ENCODE measurements at regions of chr2 and their contacts with region 1.

Region 1: GRCh38 chr2:168455648-168456520 is at the start of gene CERS6:
- DNase-seq: peak; percentile 97
- H3K4me3 ChIP-seq: peak within 1 kb of the TSS; percentile 92 to 94
- H3K27ac ChIP-seq: peak within 1 kb of the TSS; percentile 89
- H3K4me1 ChIP-seq: no peaks in the 10 kb centered on the region
- H3K27me3 ChIP-seq: no peaks in the 10 kb centered on the region
- CTCF ChIP-seq: peak in 1 of 4 experiments; percentile 31
- POLR2A ChIP-seq: peak; percentile 93
- total RNA-seq, gene CERS6: 30.1 to 67.8 TPM

Region 2: DNA sequence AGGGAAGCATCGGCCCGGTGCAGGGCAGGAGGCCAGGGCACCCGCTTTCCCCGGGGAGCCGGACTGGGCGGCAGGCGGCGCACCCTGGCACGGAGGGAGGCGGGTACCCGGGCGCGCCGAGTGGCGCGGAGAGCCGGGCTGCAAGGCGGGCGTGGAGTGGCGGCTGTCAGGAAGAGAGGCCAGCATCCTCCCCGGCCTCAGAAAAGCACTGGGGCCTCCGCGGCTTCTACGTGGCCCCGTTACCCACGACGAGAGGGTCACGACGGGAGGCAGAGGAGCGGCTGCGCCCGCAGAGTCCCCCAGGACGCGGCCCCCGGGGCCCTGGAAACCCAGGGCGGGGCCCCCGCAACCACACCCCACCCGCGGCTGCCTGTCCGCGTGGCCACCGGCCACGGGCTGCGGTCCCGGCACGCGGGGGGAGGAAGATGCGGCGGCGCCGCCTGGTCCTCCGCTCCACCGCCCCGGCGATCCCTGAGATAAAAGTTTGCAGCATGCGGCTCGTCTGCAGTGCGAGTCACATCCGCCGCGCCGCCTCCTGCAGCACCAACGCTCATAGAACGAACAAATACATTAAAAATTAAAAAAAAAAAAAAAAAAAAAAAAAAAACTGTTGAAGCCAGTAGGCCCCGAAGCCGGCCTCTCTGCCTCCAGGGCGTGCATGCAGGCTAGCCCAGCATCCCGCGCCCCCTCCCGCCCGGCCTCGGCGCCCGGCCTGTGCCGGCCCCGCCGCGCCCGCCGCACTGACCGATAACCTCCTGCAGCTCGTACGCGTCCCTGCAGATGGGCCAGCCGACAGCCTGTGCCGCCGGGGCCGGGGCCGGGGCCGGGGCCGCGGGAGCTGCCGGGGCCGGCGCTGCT is 209.2 kb before region 1 on chr2:
- intact Hi-C with region 1: loop called (anchors 10 kb)
- DNase-seq: peak; percentile 74
- H3K4me3 ChIP-seq: peak overlapping the region; percentile 79 to 80
- H3K27ac ChIP-seq: peak overlapping the region; percentile 88 to 89
- H3K4me1 ChIP-seq: no peaks in the 10 kb centered on the region
- H3K27me3 ChIP-seq: no peaks in the 10 kb centered on the region
- CTCF ChIP-seq: peak; percentile 20 to 45 (median 36)
- POLR2A ChIP-seq: no peak

Region 3: DNA sequence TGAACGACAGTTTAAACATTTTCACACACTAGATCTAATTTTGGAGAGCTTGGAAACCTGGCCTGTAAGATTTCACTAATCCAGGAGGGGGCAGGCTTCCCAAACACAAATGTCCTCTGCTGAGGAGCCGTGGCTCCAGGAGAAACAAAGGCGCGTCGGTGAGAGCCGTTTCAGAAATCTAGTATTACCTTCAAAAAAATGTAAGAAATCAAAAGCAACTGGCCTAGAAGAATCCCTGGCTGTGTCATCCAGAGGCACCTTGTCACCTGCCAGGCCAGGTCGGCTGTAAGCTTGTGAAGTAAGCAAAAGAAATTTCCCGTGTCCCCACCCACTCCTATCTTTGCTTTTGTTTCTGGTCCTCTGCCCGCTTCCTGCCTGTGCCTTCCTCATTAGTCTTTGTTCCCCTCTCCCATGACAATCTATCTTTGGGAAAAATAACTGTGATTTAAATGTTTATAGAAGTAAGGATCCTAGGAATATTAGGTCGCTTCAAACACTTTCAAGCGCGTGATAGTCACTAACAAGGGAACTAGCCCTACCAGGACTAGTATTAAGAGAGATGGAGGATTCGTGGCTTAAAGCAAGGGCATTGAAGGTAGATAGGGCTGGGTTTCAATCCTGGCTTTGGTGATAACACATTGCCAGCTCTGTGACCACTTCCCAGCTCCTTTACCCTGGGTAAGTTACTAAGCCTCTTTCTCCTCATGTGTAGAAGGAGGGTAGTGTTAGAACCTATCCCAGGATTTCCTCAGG is 109.0 kb before region 1 on chr2:
- intact Hi-C with region 1: loop called (anchors 5 kb)
- DNase-seq: peak; percentile 68
- H3K4me3 ChIP-seq: peak overlapping the region; percentile 26 to 38
- H3K27ac ChIP-seq: peak overlapping the region; percentile 26 to 46
- H3K4me1 ChIP-seq: no peaks in the 10 kb centered on the region
- H3K27me3 ChIP-seq: no peaks in the 10 kb centered on the region
- CTCF ChIP-seq: peak; percentile 52 to 89 (median 87)
- POLR2A ChIP-seq: no peak

Region 4: GRCh38 chr2:168635065-168635577 is 179.2 kb after region 1 on chr2:
- intact Hi-C with region 1: loop called (anchors 5 kb)
- DNase-seq: no peak
- H3K4me3 ChIP-seq: no peak overlapping the region
- H3K27ac ChIP-seq: peak overlapping the region in 1 of 2 donors; percentile 30
- H3K4me1 ChIP-seq: no peaks in the 10 kb centered on the region
- H3K27me3 ChIP-seq: no peaks in the 10 kb centered on the region
- CTCF ChIP-seq: no peak
- POLR2A ChIP-seq: no peak

Region 5: DNA sequence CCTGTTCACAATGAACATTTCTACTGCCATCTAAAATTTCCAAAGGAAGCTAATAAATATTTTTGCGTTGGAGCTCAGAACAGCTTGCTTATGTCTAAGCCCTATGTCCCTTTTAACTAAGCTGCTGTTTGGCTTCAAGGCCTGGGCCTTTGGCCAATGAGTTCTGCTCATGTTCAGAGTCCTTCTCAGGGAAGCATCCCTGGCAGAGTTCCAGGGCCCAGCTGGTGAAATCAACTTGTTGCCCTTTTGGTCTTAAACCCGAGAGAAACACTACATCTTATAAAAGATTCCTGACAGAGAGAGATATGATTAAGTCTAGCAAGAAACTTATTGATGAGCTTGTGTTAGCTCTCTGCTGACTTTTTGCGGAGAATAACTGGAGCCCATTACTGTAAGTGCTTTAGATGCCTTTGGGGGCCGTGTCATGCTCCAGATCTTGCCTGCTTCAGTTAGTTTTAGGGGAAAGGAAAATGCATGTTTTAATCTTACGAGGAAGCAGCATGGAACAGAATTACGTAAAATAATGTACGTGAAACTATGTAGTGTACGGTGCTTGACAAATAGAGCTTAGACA is 244.0 kb after region 1 on chr2:
- intact Hi-C with region 1: loop called (anchors 5 kb)
- DNase-seq: peak; percentile 25
- H3K4me3 ChIP-seq: no peak overlapping the region
- H3K27ac ChIP-seq: no peak overlapping the region
- H3K4me1 ChIP-seq: no peaks in the 10 kb centered on the region
- H3K27me3 ChIP-seq: no peaks in the 10 kb centered on the region
- CTCF ChIP-seq: no peak
- POLR2A ChIP-seq: no peak

Measured in prostate gland (tissue), 2 donors.